Cardiac septum (tissue), 1 donor: ENCODE measurements at regions of chr5 and their contacts with region 1.

Region 1: GRCh38 chr5:178279725-178280438 is 47.3 kb upstream of the PHYKPL start:
- DNase-seq: peak; percentile 93

Region 2: DNA sequence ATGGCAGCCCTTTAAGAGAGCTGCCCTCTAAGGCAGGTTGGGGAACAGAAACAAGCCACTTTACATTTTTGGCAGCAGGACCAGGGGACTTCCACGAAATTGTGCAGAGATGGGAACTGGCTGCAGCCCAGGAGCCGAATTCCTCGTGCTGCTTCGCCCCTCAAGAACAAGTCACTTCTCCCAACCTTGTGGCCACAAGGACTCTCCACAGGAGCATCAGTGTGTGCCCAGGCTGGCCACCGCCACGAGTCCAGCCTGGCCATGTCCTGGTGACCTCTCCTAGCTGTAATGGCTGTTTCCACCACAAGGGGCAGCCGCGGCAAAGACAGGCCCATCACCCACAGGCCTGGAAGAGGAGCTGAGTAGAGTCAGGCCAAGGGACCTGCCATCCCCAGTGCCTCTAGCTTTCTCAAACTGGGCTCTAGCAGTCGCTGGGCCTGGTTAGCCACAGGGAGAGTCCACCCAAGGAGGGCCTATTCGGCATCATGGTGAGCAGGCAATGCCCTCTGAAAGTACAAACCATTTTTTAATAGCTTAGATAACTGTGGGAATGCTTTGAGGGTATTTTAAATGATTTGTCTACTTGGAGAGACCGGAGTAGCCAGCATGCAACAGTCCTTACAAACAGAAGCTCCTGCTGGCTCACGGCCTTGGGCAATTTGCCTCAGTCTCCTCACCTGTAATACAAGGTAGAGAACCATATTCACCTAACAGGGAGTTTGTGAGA is 181.3 kb after region 1 on chr5:
- intact Hi-C with region 1: loop called (anchors 2 kb)
- DNase-seq: peak; percentile 94

Region 3: DNA sequence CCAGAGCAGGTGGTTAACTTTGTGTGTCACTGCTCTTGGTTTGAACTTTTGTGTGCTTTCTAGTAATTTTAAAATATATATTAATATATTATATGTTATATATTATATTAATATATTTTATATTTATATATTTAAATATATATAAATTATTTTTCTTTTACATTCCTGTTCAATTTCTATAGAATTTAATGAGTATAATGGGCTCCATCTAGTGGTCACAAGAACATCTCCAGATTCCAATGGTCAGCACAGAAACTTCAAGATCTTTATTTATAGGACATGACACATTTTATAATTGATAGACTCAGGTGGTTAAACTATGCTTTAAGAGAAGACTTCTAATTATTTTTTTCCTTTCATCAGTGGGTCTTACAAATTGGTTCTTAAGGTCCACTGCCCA is 271.2 kb after region 1 on chr5:
- intact Hi-C with region 1: loop called (anchors 2 kb)
- DNase-seq: no peak

Region 4: GRCh38 chr5:178590141-178590923 is 310.4 kb after region 1 on chr5 and contains the start of gene COL23A1:
- intact Hi-C with region 1: loop called (anchors 2 kb)
- DNase-seq: peak; percentile 90
- total RNA-seq, gene COL23A1: 16.5 TPM

Region 5: GRCh38 chr5:178838695-178839685 is 559.1 kb after region 1 on chr5:
- intact Hi-C with region 1: loop called (anchors 5 kb)
- DNase-seq: peak; percentile 85